Activated T-helper 1 cell treated with anti-CD3 and anti-CD28 coated beads, Interleukin-12 subunit alpha, Interleukin-12 subunit beta, Interleukin-2, Interleukin-4 antibody, amounts not matched to agents 30 ng/mL and 10 ng/mL and 1 ng/mL, durations not matched to agents 14 hours and 24 hours and 36 hours (primary cell): ENCODE measurements at regions of chr18 and their contacts with region 1.

Region 1: GRCh38 chr18:12990967-12991838 is at the start of gene CEP192:
- DNase-seq: peak; percentile 98
- H3K4me3 Mint-ChIP-seq: peak within 1 kb of the TSS; percentile 93
- H3K27ac Mint-ChIP-seq: peak within 1 kb of the TSS; percentile 94
- H3K4me1 Mint-ChIP-seq: peaks cover 24% of the 10 kb centered on the region
- H3K27me3 Mint-ChIP-seq: peaks cover 1% of the 10 kb centered on the region
- total RNA-seq, gene CEP192: 31.2 and 32.0 TPM in 2 replicates

Region 2: GRCh38 chr18:11908182-11909060 is 1082.8 kb before region 1 on chr18 and contains the start of gene MPPE1:
- intact Hi-C with region 1: loop called (anchors 2 kb)
- DNase-seq: peak; percentile 87
- H3K4me3 Mint-ChIP-seq: peak within 1 kb of the TSS; percentile 94
- H3K27ac Mint-ChIP-seq: peak within 1 kb of the TSS; percentile 93
- H3K4me1 Mint-ChIP-seq: peaks cover 32% of the 10 kb centered on the region
- H3K27me3 Mint-ChIP-seq: no peaks in the 10 kb centered on the region
- total RNA-seq, gene MPPE1: 45.8 and 47.4 TPM in 2 replicates

Region 3: DNA sequence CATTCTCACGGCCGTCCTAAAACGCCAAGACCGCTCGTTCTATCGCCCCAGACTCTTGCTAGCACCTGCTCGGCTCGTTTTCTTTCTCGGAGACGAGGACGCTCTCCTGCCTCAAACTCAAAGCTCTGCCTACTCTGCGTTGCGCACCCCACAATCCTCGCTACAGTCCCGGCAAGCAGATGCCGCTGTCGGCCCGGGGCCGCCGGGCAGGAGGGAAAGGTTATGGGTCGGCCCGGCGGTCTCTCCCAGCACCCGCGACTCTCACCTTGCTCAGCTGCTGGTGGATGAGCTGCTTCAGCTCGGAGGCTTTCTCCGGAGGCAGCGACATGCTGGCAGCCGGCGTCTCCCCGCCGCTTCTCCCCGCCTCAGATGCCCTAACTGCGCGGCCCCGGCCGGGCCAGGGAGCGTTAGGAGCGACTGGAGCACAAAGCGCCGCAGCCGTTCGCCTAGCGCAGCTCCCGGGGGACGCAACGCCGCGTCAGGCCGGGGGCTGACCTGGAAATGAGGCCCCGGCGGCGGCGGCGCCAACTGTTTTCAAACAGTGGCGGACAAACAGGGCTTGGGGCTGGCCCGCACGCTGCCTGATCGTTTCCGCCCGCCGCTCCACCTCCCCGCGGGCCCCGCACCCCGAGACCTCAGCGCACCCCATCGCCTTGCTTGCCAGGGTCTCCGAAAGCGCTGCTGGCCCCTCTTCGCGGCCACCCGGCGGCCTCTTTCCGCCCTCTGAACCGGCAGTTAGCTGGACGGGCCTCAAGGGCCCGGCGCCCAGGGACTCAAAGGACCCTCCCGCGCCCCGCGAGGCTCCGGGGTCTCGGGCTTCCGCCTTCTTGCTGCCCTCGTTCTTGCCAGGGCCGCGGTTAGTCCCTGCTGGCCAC is 288.7 kb before region 1 on chr18 and contains the starts of genes CEP76 and PSMG2:
- intact Hi-C with region 1: loop called (anchors 1 kb)
- DNase-seq: peak; percentile 80
- H3K4me3 Mint-ChIP-seq: peak within 1 kb of the TSS; percentile 97
- H3K27ac Mint-ChIP-seq: peak within 1 kb of the TSS; percentile 92
- H3K4me1 Mint-ChIP-seq: peaks cover 54% of the 10 kb centered on the region
- H3K27me3 Mint-ChIP-seq: no peaks in the 10 kb centered on the region
- total RNA-seq, gene CEP76: 16.1 and 17.5 TPM in 2 replicates
- total RNA-seq, gene PSMG2: 113 and 118 TPM in 2 replicates

Region 4: DNA sequence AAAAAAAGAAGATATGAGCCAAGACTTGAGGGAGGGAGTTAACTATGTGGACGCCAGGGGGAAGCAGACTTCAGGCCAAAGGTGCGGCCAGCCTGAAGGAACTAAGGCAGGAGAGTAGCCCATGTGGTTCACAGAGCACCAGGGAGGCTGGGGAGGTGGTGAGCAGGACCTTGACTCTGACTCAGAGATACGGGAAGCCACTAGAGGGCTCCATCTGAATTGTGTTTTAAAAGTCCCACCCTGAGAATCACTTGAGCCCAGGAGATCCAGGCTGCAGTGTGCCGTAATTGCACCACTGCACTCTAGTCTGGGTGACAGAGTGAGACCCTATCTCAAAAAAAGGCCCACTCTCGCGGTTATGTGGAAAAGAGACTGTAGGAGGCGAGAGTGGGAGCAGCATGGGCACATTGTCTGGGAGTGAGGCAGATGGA is 12.3 kb after region 1 on chr18:
- intact Hi-C with region 1: loop called (anchors 1 kb)
- DNase-seq: no peak
- H3K4me3 Mint-ChIP-seq: no peak overlapping the region
- H3K27ac Mint-ChIP-seq: no peak overlapping the region
- H3K4me1 Mint-ChIP-seq: peaks cover 21% of the 10 kb centered on the region
- H3K27me3 Mint-ChIP-seq: no peaks in the 10 kb centered on the region

Region 5: GRCh38 chr18:13061630-13062189 is 70.5 kb after region 1 on chr18:
- intact Hi-C with region 1: no loop called
- DNase-seq: no peak
- H3K4me3 Mint-ChIP-seq: no peak overlapping the region
- H3K27ac Mint-ChIP-seq: no peak overlapping the region
- H3K4me1 Mint-ChIP-seq: peaks cover 1% of the 10 kb centered on the region
- H3K27me3 Mint-ChIP-seq: no peaks in the 10 kb centered on the region

Region 6: GRCh38 chr18:13577091-13577697 is 586.0 kb after region 1 on chr18:
- intact Hi-C with region 1: loop called (anchors 5 kb)
- DNase-seq: peak; percentile 41
- H3K4me3 Mint-ChIP-seq: peak overlapping the region; percentile 67
- H3K27ac Mint-ChIP-seq: peak overlapping the region; percentile 87
- H3K4me1 Mint-ChIP-seq: peaks cover 56% of the 10 kb centered on the region
- H3K27me3 Mint-ChIP-seq: no peaks in the 10 kb centered on the region